Colonic mucosa (tissue), 4 donors: ENCODE measurements at regions of chr14 and their contacts with region 1.

Region 1: DNA sequence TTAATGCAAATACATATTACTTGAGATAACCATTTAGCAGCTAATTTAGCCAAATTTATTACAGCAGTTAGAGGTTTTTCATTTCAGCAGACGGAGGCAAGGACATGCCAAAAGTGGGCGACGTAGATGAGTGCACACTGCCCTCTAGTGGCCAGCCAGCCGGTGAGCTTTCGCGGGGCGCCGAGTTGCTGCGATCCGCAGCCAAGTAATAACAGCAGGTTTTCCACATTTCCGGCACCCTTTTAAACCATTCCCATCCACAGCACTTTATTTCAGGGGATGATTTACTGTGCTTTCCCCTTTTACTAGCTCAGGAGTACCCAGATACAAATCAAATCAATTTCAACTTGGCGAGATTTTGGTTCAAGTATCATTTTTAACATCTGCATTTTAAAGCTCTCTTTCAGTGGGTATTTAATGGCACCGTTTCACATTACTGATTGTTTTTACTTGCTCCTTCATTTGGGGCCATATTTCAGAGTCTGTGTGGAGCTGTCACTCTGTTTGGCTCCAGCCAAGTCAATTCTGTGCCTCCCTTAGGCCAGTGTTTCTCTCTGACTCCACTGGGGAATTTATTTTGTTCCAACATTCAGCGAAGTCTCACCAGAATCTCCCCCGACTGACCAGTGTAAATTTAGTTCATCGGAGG is 158.0 kb downstream of the EGLN3 start:
- DNase-seq: peak; percentile 76
- H3K4me3 ChIP-seq: no peak overlapping the region
- H3K27ac ChIP-seq: no peak overlapping the region
- H3K4me1 ChIP-seq: no peaks in the 10 kb centered on the region
- H3K27me3 ChIP-seq: no peaks in the 10 kb centered on the region
- CTCF ChIP-seq: peak; percentile 89

Region 2: GRCh38 chr14:33323979-33324378 is 468.9 kb before region 1 on chr14:
- intact Hi-C with region 1: no loop called
- DNase-seq: no peak
- H3K4me3 ChIP-seq: no peak overlapping the region
- H3K27ac ChIP-seq: no peak overlapping the region
- H3K4me1 ChIP-seq: no peaks in the 10 kb centered on the region
- H3K27me3 ChIP-seq: no peaks in the 10 kb centered on the region
- CTCF ChIP-seq: no peak

Region 3: GRCh38 chr14:33430414-33430813 is 362.4 kb before region 1 on chr14:
- intact Hi-C with region 1: no loop called
- DNase-seq: no peak
- H3K4me3 ChIP-seq: no peak overlapping the region
- H3K27ac ChIP-seq: no peak overlapping the region
- H3K4me1 ChIP-seq: no peaks in the 10 kb centered on the region
- H3K27me3 ChIP-seq: no peaks in the 10 kb centered on the region
- CTCF ChIP-seq: no peak

Region 4: GRCh38 chr14:33475623-33476022 is 317.2 kb before region 1 on chr14:
- intact Hi-C with region 1: loop called (anchors 5 kb)
- DNase-seq: peak; percentile 70
- H3K4me3 ChIP-seq: no peak overlapping the region
- H3K27ac ChIP-seq: no peak overlapping the region
- H3K4me1 ChIP-seq: no peaks in the 10 kb centered on the region
- H3K27me3 ChIP-seq: no peaks in the 10 kb centered on the region
- CTCF ChIP-seq: peak; percentile 43

Region 5: GRCh38 chr14:34136996-34137745 is 344.3 kb after region 1 on chr14:
- intact Hi-C with region 1: no loop called
- DNase-seq: no peak
- H3K4me3 ChIP-seq: no peak overlapping the region
- H3K27ac ChIP-seq: no peak overlapping the region
- H3K4me1 ChIP-seq: no peaks in the 10 kb centered on the region
- H3K27me3 ChIP-seq: no peaks in the 10 kb centered on the region
- CTCF ChIP-seq: no peak